ENCODE measurements at regions of chr4 and their contacts with region 1.

Region 1: DNA sequence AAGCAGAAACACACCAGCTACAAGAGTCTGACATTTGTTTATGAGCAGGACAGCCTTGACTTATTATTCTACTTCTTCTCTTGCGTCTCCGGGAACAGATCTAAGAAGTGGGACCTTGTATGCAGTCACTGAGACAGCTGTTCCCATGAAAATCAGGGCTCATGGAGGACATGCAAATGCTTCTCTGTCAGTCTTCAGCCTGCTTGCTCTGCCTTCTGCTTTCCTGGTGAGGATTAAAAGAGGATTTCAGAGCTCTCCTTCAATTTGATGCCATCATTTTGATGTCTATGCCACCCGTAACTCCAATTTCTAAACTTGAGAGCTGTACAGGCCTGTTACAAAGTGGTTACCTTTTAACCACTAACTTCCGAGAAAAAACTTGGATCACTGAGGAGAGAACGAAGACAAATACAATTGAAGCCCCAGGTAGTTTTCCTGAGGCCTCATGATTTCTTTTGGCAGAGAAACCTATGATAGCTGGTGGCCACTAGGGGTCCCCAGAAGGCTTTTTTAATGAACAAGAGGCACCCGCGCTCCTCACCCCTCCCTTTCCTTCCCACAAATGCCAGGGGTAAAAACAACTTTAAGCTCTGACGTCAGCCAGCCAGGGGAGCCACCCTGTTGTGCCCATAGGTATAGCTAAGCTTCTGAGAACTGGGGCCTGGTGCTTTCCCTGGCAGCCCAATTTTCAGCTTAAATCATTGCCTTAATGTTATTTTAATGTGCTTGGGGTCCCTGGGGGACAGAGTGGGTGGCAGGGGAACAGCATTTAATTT is 97.0 kb downstream of the DDIT4L start:
- DNase-seq: peak; percentile 48
- CTCF ChIP-seq: peak; percentile 74

Region 2: GRCh38 chr4:99998062-99998867 is 95.0 kb before region 1 on chr4:
- CTCF ChIA-PET with region 1: interaction called, 16 read pairs
- POLR2A ChIA-PET with region 1: no interaction called
- DNase-seq: peak; percentile 18
- CTCF ChIP-seq: peak; percentile 39

Region 3: GRCh38 chr4:100009490-100009889 is 83.8 kb before region 1 on chr4:
- CTCF ChIA-PET with region 1: interaction called, 11 read pairs
- POLR2A ChIA-PET with region 1: no interaction called
- DNase-seq: no peak
- CTCF ChIP-seq: no peak

Region 4: DNA sequence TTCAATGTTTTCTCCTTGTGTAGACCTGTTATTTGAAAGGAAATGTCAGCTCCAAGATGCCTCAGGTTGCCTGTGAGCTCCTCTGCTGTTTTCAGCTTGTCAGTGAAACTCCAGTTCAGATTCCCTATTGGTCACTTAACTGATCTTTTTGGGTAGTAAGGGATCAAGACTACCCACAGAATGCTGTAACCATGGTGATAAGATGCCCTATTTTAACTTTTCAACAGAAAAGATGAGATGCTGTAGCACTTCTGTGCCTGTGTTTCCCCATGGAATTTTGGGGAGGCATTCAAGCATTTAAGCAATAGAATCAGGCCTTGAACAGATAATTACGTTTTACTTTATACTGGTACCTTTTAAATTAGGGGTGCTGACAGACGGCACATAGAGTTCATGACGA is 36.6 kb before region 1 on chr4:
- CTCF ChIA-PET with region 1: interaction called, 10 read pairs
- POLR2A ChIA-PET with region 1: no interaction called
- DNase-seq: no peak
- CTCF ChIP-seq: no peak

Region 5: DNA sequence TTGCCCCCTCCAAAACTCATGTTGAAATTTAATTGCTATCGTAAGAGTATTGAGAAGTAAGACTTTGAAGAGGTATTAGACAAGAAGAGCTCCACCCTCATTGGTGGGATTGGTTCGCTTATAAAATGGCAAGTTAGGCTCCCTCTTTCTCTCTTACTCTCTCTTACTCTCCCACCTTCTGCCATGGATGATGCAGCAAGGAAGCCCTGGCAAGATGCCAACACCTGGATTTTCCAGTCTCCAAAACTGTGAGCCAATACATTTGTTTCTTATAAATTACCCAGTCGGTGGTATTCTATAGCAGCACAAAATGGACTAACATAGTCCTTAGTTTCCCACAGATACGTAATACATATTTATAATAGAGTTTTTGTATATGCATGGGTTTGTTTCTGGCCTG is 22.4 kb before region 1 on chr4:
- CTCF ChIA-PET with region 1: interaction called, 169 read pairs
- POLR2A ChIA-PET with region 1: no interaction called
- DNase-seq: no peak
- CTCF ChIP-seq: no peak

Region 6: DNA sequence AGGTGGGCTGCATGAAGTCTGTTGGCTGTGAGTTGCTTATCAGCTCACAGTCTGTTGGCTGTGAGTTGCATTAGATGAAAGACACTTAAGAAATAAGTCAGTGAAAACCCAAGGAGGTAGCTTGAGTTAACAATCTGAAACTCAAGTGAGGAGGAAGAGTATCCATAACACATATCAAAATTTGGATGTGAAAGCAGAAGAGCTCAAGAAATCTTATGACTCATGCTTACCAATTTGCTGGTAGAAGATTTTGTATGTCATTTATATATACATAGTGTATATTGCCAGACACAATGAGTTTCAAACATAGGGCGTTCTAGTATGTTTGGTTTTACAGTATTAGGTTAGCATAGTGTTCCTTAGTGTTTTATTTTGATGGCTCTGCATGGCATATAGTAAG is 10.4 kb before region 1 on chr4:
- CTCF ChIA-PET with region 1: interaction called, 169 read pairs
- POLR2A ChIA-PET with region 1: no interaction called
- DNase-seq: no peak
- CTCF ChIP-seq: no peak

Region 7: GRCh38 chr4:100106982-100107381 is 13.7 kb after region 1 on chr4:
- CTCF ChIA-PET with region 1: interaction called, 90 read pairs
- POLR2A ChIA-PET with region 1: no interaction called
- DNase-seq: peak; percentile 17
- CTCF ChIP-seq: no peak